Aorta (tissue), 5 donors: ENCODE measurements at regions of chr7 and their contacts with region 1.

Region 1: DNA sequence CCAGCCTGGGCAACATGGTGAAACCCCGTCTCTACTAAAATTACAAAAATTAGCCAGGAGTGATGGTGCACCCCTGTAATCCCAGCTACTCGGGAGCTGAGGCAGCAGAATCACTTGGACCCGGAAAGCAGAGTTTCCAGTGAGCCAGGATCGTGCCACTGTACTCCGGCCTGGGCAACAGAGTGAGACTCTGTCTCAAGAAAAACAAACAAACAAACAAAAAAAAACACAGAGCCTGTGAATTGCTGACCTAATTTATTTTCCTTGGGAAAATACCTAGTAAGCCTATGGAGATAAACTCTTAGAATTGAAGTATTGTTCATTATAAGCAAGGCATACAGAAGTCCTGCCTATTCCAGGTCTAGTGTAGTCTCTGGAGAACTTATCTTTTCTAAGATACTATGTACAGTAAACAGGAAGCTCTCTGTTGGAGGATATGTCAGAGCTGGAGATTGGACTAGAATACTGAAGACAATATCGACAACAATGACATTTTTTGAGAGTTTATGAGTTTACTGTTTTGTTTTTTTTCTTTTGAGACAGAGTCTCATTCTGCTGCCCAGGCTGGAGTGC is 14.9 kb downstream of the GTF2I start:
- DNase-seq: no peak
- ATAC-seq: no peak
- H3K4me3 ChIP-seq: no peak overlapping the region
- H3K27ac ChIP-seq: no peak overlapping the region
- H3K4me1 ChIP-seq: no peaks in the 10 kb centered on the region
- H3K27me3 ChIP-seq: no peaks in the 10 kb centered on the region

Region 2: GRCh38 chr7:74633451-74633921 is 38.9 kb before region 1 on chr7:
- intact Hi-C with region 1: loop called in 1 of 2 experiments (anchors 5 kb)
- DNase-seq: no peak
- ATAC-seq: no peak
- H3K4me3 ChIP-seq: no peak overlapping the region
- H3K27ac ChIP-seq: no peak overlapping the region
- H3K4me1 ChIP-seq: no peaks in the 10 kb centered on the region
- H3K27me3 ChIP-seq: no peaks in the 10 kb centered on the region